ENCODE measurements at regions of chrX and their contacts with region 1.

Region 1: GRCh38 chrX:48475774-48476577 is at the start of gene FTSJ1:
- DNase-seq: peak; percentile 59 to 95 (median 91)
- ATAC-seq: peak; percentile 93
- H3K4me3 ChIP-seq: peak within 1 kb of the TSS; percentile 83
- H3K4me3 Mint-ChIP-seq: peak within 1 kb of the TSS; percentile 74 to 93 (median 88)
- H3K27ac ChIP-seq: peak within 1 kb of the TSS; percentile 93
- H3K27ac Mint-ChIP-seq: peak within 1 kb of the TSS; percentile 84 to 96 (median 93)
- H3K4me1 ChIP-seq: peaks cover 8 to 10% of the 10 kb centered on the region in 2 donors
- H3K4me1 Mint-ChIP-seq: peaks cover 19 to 35% (median 26%) of the 10 kb centered on the region in 7 donors
- H3K27me3 ChIP-seq: no peaks in the 10 kb centered on the region
- H3K27me3 Mint-ChIP-seq: no peaks in the 10 kb centered on the region
- total RNA-seq, gene FTSJ1: 48.6 to 62.5 (median 59.5) TPM

Region 2: DNA sequence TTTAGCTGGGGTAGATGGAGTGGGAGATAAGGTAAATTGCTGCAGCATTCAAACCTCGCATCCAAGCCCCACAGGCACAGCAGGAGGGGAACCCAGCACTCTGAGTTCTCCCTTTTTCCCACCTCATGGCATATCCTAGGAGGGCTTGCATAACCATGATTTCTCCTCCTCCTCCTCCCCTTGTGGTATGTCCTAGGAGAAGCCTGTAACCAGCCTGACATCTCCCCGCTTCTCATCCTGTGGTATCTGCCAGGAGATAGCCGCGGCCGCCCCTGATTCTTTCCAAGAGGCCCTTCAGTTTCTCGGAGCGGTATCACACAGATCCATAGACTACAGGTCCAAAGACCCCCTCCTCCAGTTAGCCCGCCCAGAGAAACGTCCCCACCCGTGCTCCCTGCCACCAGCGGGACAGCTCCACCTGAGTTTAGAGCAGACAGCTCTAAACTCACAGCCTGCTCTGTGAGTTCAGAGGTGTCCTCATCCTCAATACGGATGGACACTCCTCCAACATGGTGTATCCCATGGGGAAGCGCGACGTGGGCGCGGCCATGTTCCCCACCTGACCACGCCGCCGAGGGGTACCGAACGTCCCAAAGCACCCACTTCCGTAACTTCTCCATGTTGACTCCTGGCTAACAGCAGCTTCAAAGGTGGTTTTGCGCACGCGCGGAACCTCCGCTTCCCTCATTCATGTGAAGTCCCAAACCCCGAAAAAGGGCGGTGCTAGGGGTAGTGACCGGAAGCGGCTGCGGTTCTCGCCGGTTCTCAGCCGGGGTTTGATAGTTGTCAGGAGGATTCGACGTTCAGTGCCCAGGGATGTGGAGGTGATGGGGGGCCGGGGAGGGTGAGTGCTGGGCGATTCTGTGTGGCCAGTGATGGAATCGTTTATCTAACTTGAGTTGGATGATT is 639.6 kb before region 1 on chrX and contains the start of gene ZNF81:
- CTCF ChIA-PET with region 1: no interaction called
- POLR2A ChIA-PET with region 1: no interaction called
- intact Hi-C with region 1: loop called (anchors 2 kb)
- DNase-seq: peak; percentile 73 to 91 (median 83)
- ATAC-seq: peak; percentile 96
- H3K4me3 ChIP-seq: peak within 1 kb of the TSS; percentile 67
- H3K4me3 Mint-ChIP-seq: peak within 1 kb of the TSS; percentile 96 to 99 (median 98)
- H3K27ac ChIP-seq: peak within 1 kb of the TSS; percentile 79
- H3K27ac Mint-ChIP-seq: peak within 1 kb of the TSS; percentile 94 to 99 (median 97)
- H3K4me1 ChIP-seq: peaks cover 4 to 6% of the 10 kb centered on the region in 2 donors
- H3K4me1 Mint-ChIP-seq: peaks cover 1 to 36% (median 26%) of the 10 kb centered on the region in 7 donors
- H3K27me3 ChIP-seq: no peaks in the 10 kb centered on the region
- H3K27me3 Mint-ChIP-seq: no peaks in the 10 kb centered on the region
- total RNA-seq, gene ZNF81: 11.0 to 14.7 (median 11.7) TPM

Region 3: DNA sequence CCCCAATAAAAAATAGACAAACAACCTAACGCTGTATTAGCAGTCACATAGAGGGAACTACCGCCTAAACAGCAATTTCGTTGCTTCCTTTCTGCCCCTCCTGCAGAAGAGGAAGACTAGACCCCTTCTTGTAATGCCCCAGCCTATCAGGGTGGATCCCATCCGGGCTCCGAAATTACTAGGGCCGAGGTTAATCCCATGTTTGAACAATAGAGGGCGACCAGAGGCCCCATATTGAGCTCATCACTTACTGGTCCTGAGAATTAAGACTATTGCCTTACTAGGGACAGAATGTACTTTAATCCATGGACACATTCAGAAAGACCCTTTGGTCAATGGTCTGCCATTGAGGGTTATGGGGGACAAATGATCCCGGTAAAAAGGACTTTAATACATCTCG is 392.8 kb before region 1 on chrX:
- CTCF ChIA-PET with region 1: interaction called, 3 read pairs
- POLR2A ChIA-PET with region 1: interaction called, 3 read pairs
- intact Hi-C with region 1: loop called in 1 of 2 experiments (anchors 5 kb)
- DNase-seq: peak in 8 of 9 donors; percentile 21 to 59 (median 44)
- ATAC-seq: peak; percentile 78
- H3K4me3 ChIP-seq: no peak overlapping the region
- H3K4me3 Mint-ChIP-seq: no peak overlapping the region
- H3K27ac ChIP-seq: no peak overlapping the region
- H3K27ac Mint-ChIP-seq: no peak overlapping the region
- H3K4me1 ChIP-seq: no peaks in the 10 kb centered on the region
- H3K4me1 Mint-ChIP-seq: peaks cover 0 to 3% (median 0%) of the 10 kb centered on the region in 7 donors
- H3K27me3 ChIP-seq: no peaks in the 10 kb centered on the region
- H3K27me3 Mint-ChIP-seq: no peaks in the 10 kb centered on the region

Region 4: GRCh38 chrX:48521353-48522243 is 45.6 kb after region 1 on chrX and contains the start of gene EBP:
- CTCF ChIA-PET with region 1: no interaction called
- POLR2A ChIA-PET with region 1: interaction called, 3 read pairs
- intact Hi-C with region 1: loop called (anchors 1 kb)
- DNase-seq: peak; percentile 82 to 96 (median 94)
- ATAC-seq: peak; percentile 98
- H3K4me3 ChIP-seq: peak within 1 kb of the TSS; percentile 78
- H3K4me3 Mint-ChIP-seq: peak within 1 kb of the TSS; percentile 73 to 93 (median 89)
- H3K27ac ChIP-seq: peak within 1 kb of the TSS; percentile 82
- H3K27ac Mint-ChIP-seq: peak within 1 kb of the TSS; percentile 90 to 99 (median 94)
- H3K4me1 ChIP-seq: peaks cover 12 to 19% of the 10 kb centered on the region in 2 donors
- H3K4me1 Mint-ChIP-seq: peaks cover 14 to 39% (median 34%) of the 10 kb centered on the region in 7 donors
- H3K27me3 ChIP-seq: no peaks in the 10 kb centered on the region
- H3K27me3 Mint-ChIP-seq: no peaks in the 10 kb centered on the region
- total RNA-seq, gene EBP: 33.3 to 188 (median 35.3) TPM

Region 5: DNA sequence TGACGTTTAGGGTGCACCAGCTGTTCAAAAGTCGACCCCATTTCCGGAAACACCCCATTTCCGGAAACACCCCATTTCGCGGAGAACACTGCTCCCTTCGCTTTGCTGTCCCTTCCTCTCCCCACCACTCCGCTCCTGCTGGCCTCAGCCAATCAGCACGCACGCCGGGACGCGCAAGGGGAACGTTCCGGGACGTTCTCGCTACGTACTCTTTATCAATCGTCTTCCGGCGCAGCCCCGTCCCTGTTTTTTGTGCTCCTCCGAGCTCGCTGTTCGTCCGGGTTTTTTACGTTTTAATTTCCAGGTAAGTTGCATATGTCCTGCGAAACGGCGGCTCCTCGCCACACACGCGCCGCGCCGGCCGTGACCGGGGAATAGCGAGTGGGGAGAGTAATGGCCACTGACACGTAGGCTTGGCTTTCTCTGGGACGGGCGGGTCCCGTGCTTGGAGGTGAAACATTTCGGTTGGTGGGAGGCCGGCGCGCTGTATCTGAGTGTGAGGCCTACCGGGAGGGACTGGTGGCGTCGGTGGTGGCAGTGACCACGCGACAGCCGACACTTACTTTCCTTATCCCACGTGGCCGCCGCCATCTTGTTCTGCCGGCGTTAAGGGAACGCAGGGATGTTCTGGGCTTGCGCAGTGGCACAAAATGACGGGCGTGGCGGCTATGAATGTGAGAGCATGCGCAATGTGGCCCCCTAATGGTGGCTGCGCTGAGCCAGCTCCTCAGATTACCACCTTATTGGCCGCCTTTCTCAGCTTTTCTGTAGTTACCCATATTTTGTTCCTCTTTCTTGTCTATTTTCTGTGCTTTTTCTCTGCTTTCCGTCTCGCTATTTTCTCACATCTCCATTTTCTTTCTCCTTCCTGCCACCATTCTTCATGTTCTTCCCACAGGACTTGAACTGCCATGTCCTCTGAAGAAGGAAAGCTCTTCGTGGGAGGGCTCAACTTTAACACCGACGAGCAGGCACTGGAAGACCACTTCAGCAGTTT is 98.6 kb after region 1 on chrX and contains the start of gene RBM3:
- CTCF ChIA-PET with region 1: no interaction called
- POLR2A ChIA-PET with region 1: interaction called, 10 read pairs
- intact Hi-C with region 1: loop called (anchors 1 kb)
- DNase-seq: peak; percentile 64 to 96 (median 92)
- ATAC-seq: peak; percentile 94
- H3K4me3 ChIP-seq: peak within 1 kb of the TSS; percentile 68
- H3K4me3 Mint-ChIP-seq: peak within 1 kb of the TSS; percentile 88 to 100 (median 97)
- H3K27ac ChIP-seq: peak within 1 kb of the TSS; percentile 99
- H3K27ac Mint-ChIP-seq: peak within 1 kb of the TSS; percentile 95 to 100 (median 99)
- H3K4me1 ChIP-seq: peaks cover 16 to 20% of the 10 kb centered on the region in 2 donors
- H3K4me1 Mint-ChIP-seq: peaks cover 6 to 32% (median 25%) of the 10 kb centered on the region in 7 donors
- H3K27me3 ChIP-seq: no peaks in the 10 kb centered on the region
- H3K27me3 Mint-ChIP-seq: no peaks in the 10 kb centered on the region
- total RNA-seq, gene RBM3: 176 to 374 (median 329) TPM

Region 6: GRCh38 chrX:48683411-48683982 is 207.5 kb after region 1 on chrX and contains the start of gene WAS:
- CTCF ChIA-PET with region 1: no interaction called
- POLR2A ChIA-PET with region 1: no interaction called
- intact Hi-C with region 1: loop called in 1 of 2 experiments (anchors 10 kb)
- DNase-seq: peak in 8 of 9 donors; percentile 35 to 63 (median 54)
- ATAC-seq: peak; percentile 85
- H3K4me3 ChIP-seq: peak within 1 kb of the TSS; percentile 82
- H3K4me3 Mint-ChIP-seq: peak within 1 kb of the TSS; percentile 84 to 98 (median 91)
- H3K27ac ChIP-seq: peak within 1 kb of the TSS; percentile 76
- H3K27ac Mint-ChIP-seq: peak within 1 kb of the TSS; percentile 87 to 97 (median 95)
- H3K4me1 ChIP-seq: peaks cover 25 to 36% of the 10 kb centered on the region in 2 donors
- H3K4me1 Mint-ChIP-seq: peaks cover 33 to 69% (median 54%) of the 10 kb centered on the region in 7 donors
- H3K27me3 ChIP-seq: no peaks in the 10 kb centered on the region
- H3K27me3 Mint-ChIP-seq: no peaks in the 10 kb centered on the region
- total RNA-seq, gene WAS: 92.2 to 164 (median 105) TPM

Region 7: GRCh38 chrX:48917139-48918001 is 441.4 kb after region 1 on chrX:
- CTCF ChIA-PET with region 1: no interaction called
- POLR2A ChIA-PET with region 1: no interaction called
- intact Hi-C with region 1: loop called in 1 of 2 experiments (anchors 5 kb)
- DNase-seq: peak; percentile 73 to 92 (median 88)
- ATAC-seq: peak; percentile 65
- H3K4me3 ChIP-seq: peak overlapping the region; percentile 75
- H3K4me3 Mint-ChIP-seq: peak overlapping the region; percentile 87 to 99 (median 96)
- H3K27ac ChIP-seq: peak overlapping the region; percentile 95
- H3K27ac Mint-ChIP-seq: peak overlapping the region; percentile 89 to 99 (median 96)
- H3K4me1 ChIP-seq: peaks cover 46 to 49% of the 10 kb centered on the region in 2 donors
- H3K4me1 Mint-ChIP-seq: peaks cover 11 to 82% (median 48%) of the 10 kb centered on the region in 7 donors
- H3K27me3 ChIP-seq: no peaks in the 10 kb centered on the region
- H3K27me3 Mint-ChIP-seq: peaks cover 0 to 5% (median 0%) of the 10 kb centered on the region in 5 donors

Measured in naive thymus-derived CD4-positive, alpha-beta T cell (primary cell).